ENCODE measurements at regions of chr21 and their contacts with region 1.

Region 1: GRCh38 chr21:17679002-17679600 is 66.4 kb upstream of the BTG3 start:
- DNase-seq: no peak
- ATAC-seq: peak; percentile 76
- H3K4me3 ChIP-seq: no peak overlapping the region
- H3K27ac ChIP-seq: no peak overlapping the region
- H3K4me1 ChIP-seq: no peaks in the 10 kb centered on the region
- H3K27me3 ChIP-seq: no peaks in the 10 kb centered on the region

Region 2: GRCh38 chr21:17542371-17543011 is 136.6 kb before region 1 on chr21:
- intact Hi-C with region 1: no loop called
- DNase-seq: no peak
- ATAC-seq: no peak
- H3K4me3 ChIP-seq: no peak overlapping the region
- H3K27ac ChIP-seq: no peak overlapping the region
- H3K4me1 ChIP-seq: no peaks in the 10 kb centered on the region
- H3K27me3 ChIP-seq: peaks cover 0 to 1% of the 10 kb centered on the region in 2 donors

Region 3: GRCh38 chr21:17660449-17660848 is 18.7 kb before region 1 on chr21:
- intact Hi-C with region 1: no loop called
- DNase-seq: no peak
- ATAC-seq: no peak
- H3K4me3 ChIP-seq: no peak overlapping the region
- H3K27ac ChIP-seq: no peak overlapping the region
- H3K4me1 ChIP-seq: no peaks in the 10 kb centered on the region
- H3K27me3 ChIP-seq: no peaks in the 10 kb centered on the region

Region 4: GRCh38 chr21:17903029-17903806 is 224.1 kb after region 1 on chr21:
- intact Hi-C with region 1: loop called (anchors 5 kb)
- DNase-seq: no peak
- ATAC-seq: no peak
- H3K4me3 ChIP-seq: no peak overlapping the region
- H3K27ac ChIP-seq: no peak overlapping the region
- H3K4me1 ChIP-seq: no peaks in the 10 kb centered on the region
- H3K27me3 ChIP-seq: no peaks in the 10 kb centered on the region

Region 5: GRCh38 chr21:17925000-17925610 is 246.0 kb after region 1 on chr21:
- intact Hi-C with region 1: loop called (anchors 5 kb)
- DNase-seq: no peak
- ATAC-seq: peak; percentile 88
- H3K4me3 ChIP-seq: no peak overlapping the region
- H3K27ac ChIP-seq: no peak overlapping the region
- H3K4me1 ChIP-seq: no peaks in the 10 kb centered on the region
- H3K27me3 ChIP-seq: no peaks in the 10 kb centered on the region